MCF 10A (cell line): ENCODE measurements at regions of chrX and their contacts with region 1.

Region 1: GRCh38 chrX:120560842-120561633 is at the start of gene CUL4B:
- DNase-seq: peak; percentile 96
- H3K4me3 Mint-ChIP-seq: peak within 1 kb of the TSS; percentile 72
- H3K27ac Mint-ChIP-seq: peak within 1 kb of the TSS; percentile 36
- H3K4me1 Mint-ChIP-seq: peaks cover 6% of the 10 kb centered on the region
- H3K27me3 Mint-ChIP-seq: peaks cover 13% of the 10 kb centered on the region
- CTCF ChIP-seq: no peak
- total RNA-seq, gene CUL4B: 29.5 and 29.6 TPM in 2 replicates

Region 2: DNA sequence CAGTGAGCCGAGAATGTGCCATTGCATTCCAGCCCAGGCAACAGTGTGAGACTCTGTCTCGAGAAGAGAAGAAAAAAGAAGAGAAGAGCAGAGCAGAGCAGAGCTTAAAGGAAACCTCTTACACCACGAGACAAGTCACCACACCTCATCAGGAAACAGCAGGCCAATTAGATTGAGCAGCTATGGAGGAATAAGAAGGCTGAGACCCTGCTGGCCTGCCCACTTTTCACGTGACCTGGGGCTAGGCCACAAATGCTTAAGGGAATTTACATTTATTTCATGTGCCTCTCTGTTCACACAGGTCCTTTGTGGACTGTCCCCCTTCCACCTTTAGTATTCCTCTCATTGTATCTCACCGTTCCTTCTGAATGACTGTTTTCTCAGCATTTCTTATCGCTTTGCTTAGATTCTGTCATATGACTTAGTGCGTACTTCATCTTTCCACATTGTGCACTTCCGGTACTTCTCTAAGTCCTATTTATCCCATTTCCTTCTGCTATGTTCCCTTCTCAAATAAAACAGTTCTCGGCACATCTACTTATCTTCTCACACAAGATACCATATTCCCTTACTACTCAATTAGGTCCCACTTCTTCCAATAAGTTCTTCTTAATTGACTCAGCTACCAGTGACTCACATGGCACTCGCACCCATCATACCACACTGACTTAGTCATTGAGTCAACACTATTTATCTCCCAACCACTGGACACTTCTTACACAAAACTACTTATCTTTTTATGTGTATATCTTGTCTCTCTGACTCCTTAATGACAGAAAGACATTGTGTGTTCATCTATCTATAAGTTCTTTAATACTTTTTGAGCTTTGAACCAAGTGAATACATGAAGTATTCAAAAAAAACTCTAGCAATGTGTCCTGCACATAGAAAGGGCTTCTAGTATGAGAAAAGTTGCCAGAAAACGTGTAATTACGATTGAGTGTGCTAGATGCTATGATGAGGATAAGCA is 11.3 kb before region 1 on chrX:
- CTCF ChIA-PET with region 1: no interaction called
- POLR2A ChIA-PET with region 1: interaction called, 69 read pairs
- intact Hi-C with region 1: no loop called
- DNase-seq: peak; percentile 90
- H3K4me3 Mint-ChIP-seq: peak overlapping the region; percentile 47
- H3K27ac Mint-ChIP-seq: peak overlapping the region; percentile 61
- H3K4me1 Mint-ChIP-seq: peaks cover 12% of the 10 kb centered on the region
- H3K27me3 Mint-ChIP-seq: peaks cover 9% of the 10 kb centered on the region
- CTCF ChIP-seq: no peak

Region 3: DNA sequence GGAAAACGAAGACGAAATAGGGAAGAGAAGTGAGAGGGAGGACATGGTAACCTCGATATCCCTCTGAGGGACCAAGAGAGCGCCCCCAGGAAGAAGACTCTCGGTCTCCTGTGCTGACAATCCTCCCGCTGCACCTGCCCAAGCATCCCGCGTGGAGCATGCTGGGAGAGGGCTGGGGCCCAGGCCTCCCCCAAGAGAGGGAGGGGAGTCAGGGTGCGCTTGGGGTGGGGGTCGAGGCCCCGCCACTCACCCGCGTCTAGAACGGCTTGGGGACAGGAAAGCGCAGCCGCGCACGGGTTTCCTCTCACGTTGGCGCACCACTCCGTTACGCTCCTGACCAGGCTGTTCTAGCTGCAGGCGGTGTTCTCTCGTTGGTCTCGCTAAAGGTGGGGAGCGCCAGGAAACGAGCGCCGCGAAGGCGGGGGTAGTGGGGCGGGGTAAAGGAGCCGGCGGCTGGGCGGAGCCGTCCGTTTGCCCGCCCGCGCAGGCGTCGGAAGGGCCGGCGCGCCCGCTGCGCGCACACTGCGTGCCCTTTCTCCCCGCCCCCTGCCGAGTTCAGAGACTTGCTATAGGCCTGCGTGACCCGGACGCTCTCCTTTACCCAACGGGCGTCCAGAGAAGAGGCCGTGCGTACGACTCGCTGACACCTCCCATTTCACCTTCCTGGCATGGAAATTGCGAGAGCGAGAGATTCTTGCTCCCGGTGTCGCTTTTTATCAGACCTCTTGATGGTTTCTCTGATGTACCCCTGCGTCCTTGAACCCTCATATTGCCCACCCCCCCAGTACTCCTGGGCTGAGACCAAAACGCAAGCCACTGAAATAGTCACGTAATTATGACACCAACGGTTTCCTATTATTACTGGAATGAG is 68.9 kb after region 1 on chrX and contains the start of gene C1GALT1C1:
- CTCF ChIA-PET with region 1: interaction called, 3 read pairs
- POLR2A ChIA-PET with region 1: interaction called, 12 read pairs
- intact Hi-C with region 1: no loop called
- DNase-seq: peak; percentile 92
- H3K4me3 Mint-ChIP-seq: peak within 1 kb of the TSS; percentile 85
- H3K27ac Mint-ChIP-seq: peak within 1 kb of the TSS; percentile 95
- H3K4me1 Mint-ChIP-seq: no peaks in the 10 kb centered on the region
- H3K27me3 Mint-ChIP-seq: no peaks in the 10 kb centered on the region
- CTCF ChIP-seq: no peak
- total RNA-seq, gene C1GALT1C1: 6.3 and 8.7 TPM in 2 replicates

Region 4: DNA sequence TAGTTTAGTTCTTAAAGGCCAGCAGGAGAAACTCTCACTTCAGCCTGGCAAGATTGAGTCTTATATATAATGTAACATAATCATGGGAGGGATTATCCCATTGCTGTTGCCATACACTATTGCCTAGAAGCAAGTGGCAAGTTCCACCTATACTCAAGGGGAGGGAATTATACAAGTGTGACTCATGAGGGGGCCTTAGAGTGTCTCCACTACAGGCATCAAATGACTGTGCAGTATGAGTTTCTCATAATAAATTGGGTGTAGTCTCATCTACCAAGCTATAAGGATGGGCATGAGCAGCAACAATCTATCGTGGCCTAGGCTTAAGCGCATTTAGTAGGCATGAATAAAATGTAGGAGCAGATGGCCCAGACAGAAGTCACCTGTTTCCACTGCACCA is 157.9 kb after region 1 on chrX:
- CTCF ChIA-PET with region 1: no interaction called
- POLR2A ChIA-PET with region 1: no interaction called
- intact Hi-C with region 1: no loop called
- DNase-seq: no peak
- H3K4me3 Mint-ChIP-seq: no peak overlapping the region
- H3K27ac Mint-ChIP-seq: no peak overlapping the region
- H3K4me1 Mint-ChIP-seq: no peaks in the 10 kb centered on the region
- H3K27me3 Mint-ChIP-seq: peaks cover 11% of the 10 kb centered on the region
- CTCF ChIP-seq: no peak